Ovary (tissue), 10 donors: ENCODE measurements at regions of chr19 and their contacts with region 1.

Region 1: GRCh38 chr19:51338563-51339312 is 3.2 kb downstream of the VSIG10L start:
- DNase-seq: peak; percentile 83 to 92 (median 89)
- H3K4me3 ChIP-seq: peak overlapping the region; percentile 80
- H3K27ac ChIP-seq: peak overlapping the region in 1 of 2 donors; percentile 61
- H3K4me1 ChIP-seq: peaks cover 2% of the 10 kb centered on the region
- H3K27me3 ChIP-seq: no peaks in the 10 kb centered on the region
- CTCF ChIP-seq: peak; percentile 84 to 94 (median 90)
- EP300 ChIP-seq: no peak
- POLR2A ChIP-seq: no peak

Region 2: DNA sequence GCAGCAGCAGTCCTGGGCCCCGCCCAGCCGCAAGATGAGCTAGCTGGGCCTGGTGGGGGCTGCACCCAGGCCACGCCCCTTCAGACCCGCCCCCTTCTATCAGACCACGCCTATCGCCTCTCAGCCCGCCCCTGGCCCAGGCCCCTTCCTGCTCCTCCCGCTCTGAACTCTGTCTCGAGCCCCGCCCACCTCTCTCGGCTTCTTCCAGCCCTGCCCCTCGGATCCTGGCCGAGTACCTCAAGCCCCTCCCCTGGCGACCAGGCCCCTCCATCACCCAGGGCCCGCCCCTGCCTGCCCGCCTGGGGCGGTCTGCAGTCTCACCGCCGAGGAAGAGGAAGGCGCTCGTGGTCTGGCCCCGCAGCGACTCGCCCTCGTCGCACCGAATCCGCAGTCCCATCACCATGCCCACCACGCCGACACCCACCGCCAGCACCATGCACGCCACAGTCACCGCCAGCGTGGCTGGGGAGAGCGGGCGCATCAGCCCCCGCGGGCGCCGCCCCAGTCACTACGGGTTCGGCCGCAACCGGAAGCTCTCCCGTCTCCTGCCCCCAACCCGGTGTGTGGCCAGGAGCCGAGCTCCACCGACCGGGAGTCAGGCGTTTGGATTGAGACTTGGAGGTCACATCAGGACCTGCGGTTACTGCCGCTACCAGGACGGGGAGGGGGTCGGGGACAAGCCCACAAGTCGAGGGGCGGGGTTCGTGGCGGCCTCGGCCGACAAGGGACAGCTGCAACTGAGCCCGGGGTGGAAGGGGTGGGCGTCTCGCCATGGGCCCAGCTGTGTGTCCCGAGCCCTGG is 29.0 kb after region 1 on chr19:
- intact Hi-C with region 1: loop called in 2 of 4 experiments (anchors 1 to 2 kb)
- DNase-seq: peak; percentile 99 to 100 (median 100)
- H3K4me3 ChIP-seq: peak overlapping the region; percentile 95
- H3K27ac ChIP-seq: peak overlapping the region; percentile 74 to 80
- H3K4me1 ChIP-seq: peaks cover 7% of the 10 kb centered on the region
- H3K27me3 ChIP-seq: no peaks in the 10 kb centered on the region
- CTCF ChIP-seq: no peak
- EP300 ChIP-seq: no peak
- POLR2A ChIP-seq: no peak

Region 3: DNA sequence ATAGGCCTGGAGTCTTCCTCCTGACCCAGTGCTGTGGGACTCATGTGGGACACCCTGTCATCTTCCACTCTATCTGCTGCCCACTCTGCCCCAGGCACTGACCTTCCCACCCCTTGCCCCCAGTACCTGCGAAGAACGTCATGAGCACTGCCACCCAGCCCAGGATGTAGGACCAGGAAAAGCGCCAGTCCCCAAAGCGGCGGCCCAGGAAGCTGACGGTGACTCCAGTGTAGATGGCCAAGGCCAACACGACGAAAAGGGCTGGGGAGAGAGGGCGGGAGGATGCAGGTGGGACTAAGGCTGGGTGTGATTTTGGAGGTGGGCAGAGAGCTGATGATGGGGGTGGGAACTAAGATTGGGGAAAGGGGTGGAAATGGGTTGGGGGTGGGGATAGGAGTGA is 41.6 kb after region 1 on chr19:
- intact Hi-C with region 1: no loop called
- DNase-seq: no peak
- H3K4me3 ChIP-seq: no peak overlapping the region
- H3K27ac ChIP-seq: no peak overlapping the region
- H3K4me1 ChIP-seq: no peaks in the 10 kb centered on the region
- H3K27me3 ChIP-seq: no peaks in the 10 kb centered on the region
- CTCF ChIP-seq: no peak
- EP300 ChIP-seq: no peak
- POLR2A ChIP-seq: no peak

Region 4: GRCh38 chr19:51393959-51394836 is 55.5 kb after region 1 on chr19:
- intact Hi-C with region 1: loop called in 1 of 4 experiments (anchors 10 kb)
- DNase-seq: peak; percentile 83 to 90 (median 86)
- H3K4me3 ChIP-seq: peak overlapping the region; percentile 29
- H3K27ac ChIP-seq: peak overlapping the region in 1 of 2 donors; percentile 47
- H3K4me1 ChIP-seq: no peaks in the 10 kb centered on the region
- H3K27me3 ChIP-seq: no peaks in the 10 kb centered on the region
- CTCF ChIP-seq: no peak
- EP300 ChIP-seq: no peak
- POLR2A ChIP-seq: no peak

Region 5: GRCh38 chr19:51439021-51439465 is 100.3 kb after region 1 on chr19:
- intact Hi-C with region 1: loop called in 2 of 4 experiments (anchors 5 to 10 kb)
- DNase-seq: no peak
- H3K4me3 ChIP-seq: no peak overlapping the region
- H3K27ac ChIP-seq: no peak overlapping the region
- H3K4me1 ChIP-seq: no peaks in the 10 kb centered on the region
- H3K27me3 ChIP-seq: no peaks in the 10 kb centered on the region
- CTCF ChIP-seq: no peak
- EP300 ChIP-seq: no peak
- POLR2A ChIP-seq: no peak

Region 6: GRCh38 chr19:51593969-51594773 is 255.4 kb after region 1 on chr19:
- intact Hi-C with region 1: loop called in 1 of 4 experiments (anchors 10 kb)
- DNase-seq: peak; percentile 98 to 99 (median 99)
- H3K4me3 ChIP-seq: peak overlapping the region; percentile 63
- H3K27ac ChIP-seq: no peak overlapping the region
- H3K4me1 ChIP-seq: peaks cover 9% of the 10 kb centered on the region
- H3K27me3 ChIP-seq: no peaks in the 10 kb centered on the region
- CTCF ChIP-seq: peak in 1 of 3 donors; percentile 5
- EP300 ChIP-seq: no peak
- POLR2A ChIP-seq: no peak

Region 7: GRCh38 chr19:51651216-51651846 is 312.6 kb after region 1 on chr19:
- intact Hi-C with region 1: loop called in 2 of 4 experiments (anchors 5 kb)
- DNase-seq: no peak
- H3K4me3 ChIP-seq: no peak overlapping the region
- H3K27ac ChIP-seq: no peak overlapping the region
- H3K4me1 ChIP-seq: no peaks in the 10 kb centered on the region
- H3K27me3 ChIP-seq: no peaks in the 10 kb centered on the region
- CTCF ChIP-seq: no peak
- EP300 ChIP-seq: no peak
- POLR2A ChIP-seq: no peak